PC-9 (cell line): ENCODE measurements at regions of chr19 and their contacts with region 1.

Region 1: DNA sequence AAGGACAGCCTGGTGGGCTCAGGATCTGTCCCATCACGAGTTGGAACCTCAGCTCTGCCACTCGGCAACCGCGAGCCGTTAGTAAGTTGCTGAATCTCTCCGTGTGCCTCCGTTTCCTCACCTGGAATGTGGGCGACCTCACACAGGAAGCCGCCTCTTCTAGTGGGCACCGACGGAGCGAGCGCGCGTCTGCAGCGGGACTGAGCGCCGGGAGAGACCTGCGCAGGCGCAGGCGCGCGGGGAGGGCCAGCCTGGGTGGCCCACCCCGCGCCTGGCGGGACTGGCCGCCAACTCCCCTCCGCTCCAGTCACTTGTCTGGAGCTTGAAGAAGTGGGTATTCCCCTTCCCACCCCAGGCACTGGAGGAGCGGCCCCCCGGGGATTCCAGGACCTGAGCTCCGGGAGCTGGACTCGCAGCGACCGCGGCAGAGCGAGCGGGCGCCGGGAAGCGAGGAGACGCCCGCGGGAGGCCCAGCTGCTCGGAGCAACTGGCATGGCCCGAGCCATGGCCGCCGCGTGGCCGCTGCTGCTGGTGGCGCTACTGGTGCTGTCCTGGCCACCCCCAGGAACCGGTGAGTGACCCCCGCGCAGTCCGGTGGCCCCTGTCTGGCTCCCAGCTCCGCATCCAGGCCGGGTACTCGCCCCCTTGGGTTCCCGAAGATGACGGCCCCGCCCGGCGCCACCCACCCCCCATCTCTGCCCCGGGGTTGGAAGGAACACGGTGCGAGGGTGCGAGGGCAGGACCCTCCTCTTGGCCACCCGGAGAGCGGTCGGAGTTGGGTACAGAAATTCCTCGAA is at the start of gene PVR:
- DNase-seq: peak; percentile 70 to 78
- H3K4me3 ChIP-seq: peak within 1 kb of the TSS; percentile 88
- H3K27ac ChIP-seq: peak within 1 kb of the TSS; percentile 92
- H3K4me1 ChIP-seq: peaks cover 49% of the 10 kb centered on the region
- H3K27me3 ChIP-seq: no peaks in the 10 kb centered on the region
- CTCF ChIP-seq: no peak
- total RNA-seq, gene PVR: 50.8 and 52.1 TPM in 2 replicates

Region 2: DNA sequence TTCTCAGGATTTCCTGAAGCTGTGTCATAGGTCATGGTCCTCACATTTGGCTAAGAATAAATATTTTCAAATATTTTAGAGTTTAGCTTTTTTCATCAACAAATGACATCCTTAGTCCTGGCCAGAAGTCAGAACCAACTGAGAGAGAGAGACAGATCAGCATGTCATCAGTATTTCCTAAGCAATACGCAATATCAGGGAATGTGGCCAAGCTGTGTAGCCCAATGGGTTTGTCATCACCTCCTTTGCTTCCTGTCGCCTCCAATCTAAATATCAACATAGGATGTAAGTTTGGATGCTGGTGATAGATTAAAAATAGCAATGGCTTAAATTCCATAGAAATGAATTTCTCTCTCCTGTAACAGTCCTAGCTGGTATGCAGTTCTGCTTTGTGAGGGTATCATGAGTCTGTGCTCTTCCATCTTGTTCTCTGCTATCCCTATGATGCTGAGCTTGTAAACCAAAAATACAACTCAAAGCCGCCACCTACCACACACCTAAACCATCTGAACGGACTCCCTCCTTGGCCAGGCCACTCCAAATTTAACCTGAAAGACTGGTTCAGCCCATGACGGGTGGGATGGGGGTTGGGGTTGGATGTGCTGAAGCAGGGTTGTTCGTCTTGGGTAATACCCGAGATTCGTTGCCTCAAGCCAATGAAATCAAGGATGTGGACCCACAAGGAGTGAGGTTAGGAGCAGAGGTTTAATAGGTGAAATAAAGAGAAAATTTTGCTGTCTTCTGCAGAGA is 40.4 kb before region 1 on chr19:
- CTCF ChIA-PET with region 1: no interaction called
- POLR2A ChIA-PET with region 1: no interaction called
- intact Hi-C with region 1: no loop called
- DNase-seq: no peak
- H3K4me3 ChIP-seq: no peak overlapping the region
- H3K27ac ChIP-seq: no peak overlapping the region
- H3K4me1 ChIP-seq: peaks cover 39% of the 10 kb centered on the region
- H3K27me3 ChIP-seq: no peaks in the 10 kb centered on the region
- CTCF ChIP-seq: no peak

Region 3: GRCh38 chr19:44626048-44626624 is 17.7 kb before region 1 on chr19:
- CTCF ChIA-PET with region 1: interaction called, 12 read pairs
- POLR2A ChIA-PET with region 1: interaction called, 10 read pairs
- intact Hi-C with region 1: loop called (anchors 1 kb)
- DNase-seq: peak; percentile 94 to 98
- H3K4me3 ChIP-seq: no peak overlapping the region
- H3K27ac ChIP-seq: peak overlapping the region; percentile 91
- H3K4me1 ChIP-seq: peaks cover 31% of the 10 kb centered on the region
- H3K27me3 ChIP-seq: no peaks in the 10 kb centered on the region
- CTCF ChIP-seq: no peak

Region 4: DNA sequence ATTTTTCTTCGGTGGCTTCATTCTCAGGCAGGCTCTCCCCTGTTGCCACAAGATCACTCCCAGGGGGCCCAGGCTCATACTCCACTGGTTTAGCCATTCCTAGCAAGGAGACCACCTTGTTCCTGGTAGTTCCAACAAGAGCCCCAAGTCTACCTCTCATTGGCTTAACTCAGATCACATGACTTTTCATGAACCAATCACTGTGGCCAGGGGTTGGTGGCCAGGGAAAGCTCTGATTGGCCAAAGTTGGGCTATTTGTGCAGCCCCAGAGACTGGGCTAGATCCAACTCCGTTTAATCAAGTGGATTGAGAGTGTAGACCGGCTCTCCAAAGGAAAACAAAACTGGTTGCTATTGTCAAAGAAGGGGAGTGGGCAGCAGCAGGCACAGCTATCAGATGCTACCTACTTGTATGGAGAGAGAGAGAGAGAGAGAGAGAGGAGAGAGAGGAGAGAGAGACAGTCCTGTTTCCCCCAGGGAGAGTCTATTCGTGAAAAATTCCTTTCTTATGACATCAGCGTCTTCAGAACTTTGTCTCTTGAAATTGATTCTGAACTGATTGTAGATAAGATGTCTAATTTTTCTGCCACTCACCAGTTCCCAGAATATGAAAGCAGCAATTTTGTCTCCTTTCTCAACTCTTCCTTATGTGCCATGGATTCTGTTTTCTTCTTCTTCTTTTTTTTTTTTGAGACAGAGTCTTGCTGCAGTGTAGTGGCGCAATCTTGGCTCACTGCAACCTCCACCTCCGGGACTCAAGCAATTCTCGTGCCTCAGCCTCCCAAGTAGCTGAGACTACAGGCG is 33.4 kb after region 1 on chr19:
- CTCF ChIA-PET with region 1: interaction called, 10 read pairs
- POLR2A ChIA-PET with region 1: no interaction called
- intact Hi-C with region 1: no loop called
- DNase-seq: peak; percentile 56 to 90
- H3K4me3 ChIP-seq: peak overlapping the region; percentile 19; the same call in 1 of the 2 replicates
- H3K27ac ChIP-seq: peak overlapping the region; percentile 73
- H3K4me1 ChIP-seq: peaks cover 25% of the 10 kb centered on the region
- H3K27me3 ChIP-seq: no peaks in the 10 kb centered on the region
- CTCF ChIP-seq: peak; percentile 57

Region 5: DNA sequence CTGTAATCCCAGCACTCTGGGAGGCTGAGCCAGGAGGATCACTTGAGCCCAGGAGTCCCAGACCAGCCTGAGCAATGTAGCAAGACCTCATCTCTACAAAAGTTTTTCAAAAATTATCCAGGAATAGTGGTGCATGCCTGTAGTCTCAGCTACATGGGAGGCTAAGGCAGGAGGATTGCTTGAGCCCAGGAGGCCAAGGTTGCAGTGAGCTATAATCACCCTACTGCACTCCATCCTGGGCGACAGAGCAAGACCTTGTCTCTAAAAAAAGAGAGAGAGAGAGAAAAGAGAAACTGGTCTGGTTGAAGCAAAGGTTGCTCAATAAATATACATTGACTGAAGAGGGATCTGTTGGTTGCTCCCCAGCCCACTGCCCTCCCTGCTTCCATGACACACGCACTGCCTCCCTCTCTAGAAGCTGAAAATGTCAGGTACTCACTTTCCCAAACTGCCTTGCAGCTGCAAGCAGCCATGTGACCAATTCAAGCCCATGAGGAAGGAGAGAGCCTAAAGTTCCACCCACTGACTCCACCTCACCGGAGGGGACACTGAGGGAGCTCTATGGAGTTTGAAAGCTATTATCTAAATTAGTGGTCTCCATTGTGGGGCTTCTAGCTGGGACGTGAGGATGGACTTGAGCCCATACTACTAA is 69.2 kb after region 1 on chr19:
- CTCF ChIA-PET with region 1: no interaction called
- POLR2A ChIA-PET with region 1: no interaction called
- intact Hi-C with region 1: no loop called
- DNase-seq: peak in 1 of 2 experiments; percentile 60
- H3K4me3 ChIP-seq: no peak overlapping the region
- H3K27ac ChIP-seq: no peak overlapping the region
- H3K4me1 ChIP-seq: peaks cover 13% of the 10 kb centered on the region
- H3K27me3 ChIP-seq: no peaks in the 10 kb centered on the region
- CTCF ChIP-seq: no peak